K562 (cell line): ENCODE measurements at regions of chr20 and their contacts with region 1.

Region 1: GRCh38 chr20:31587545-31588389 is 17.3 kb upstream of the ID1 start:
- DNase-seq: peak in 3 of 4 experiments; percentile 39 to 69 (median 64)
- ATAC-seq: peak; percentile 67
- H3K4me3 ChIP-seq: peak overlapping the region; percentile 27; the same call in 1 of the 2 replicates
- H3K27ac ChIP-seq: no peak overlapping the region
- H3K4me1 ChIP-seq: peaks cover 10 to 27% of the 10 kb centered on the region in 2 experiments
- H3K27me3 ChIP-seq: no peaks in the 10 kb centered on the region
- CTCF ChIP-seq: no peak
- EP300 ChIP-seq: no peak
- POLR2A ChIP-seq: no peak
- RAD21 ChIP-seq: no peak

Region 2: GRCh38 chr20:31572701-31573554 is 14.8 kb before region 1 on chr20:
- CTCF ChIA-PET with region 1: no interaction called
- POLR2A ChIA-PET with region 1: interaction called, 28 read pairs
- in situ Hi-C with region 1: no loop called
- intact Hi-C with region 1: loop called (anchors 2 kb)
- DNase-seq: peak; percentile 93 to 99 (median 95)
- ATAC-seq: peak; percentile 87
- H3K4me3 ChIP-seq: peak overlapping the region; percentile 84
- H3K27ac ChIP-seq: peak overlapping the region; percentile 96
- H3K4me1 ChIP-seq: peaks cover 10 to 48% of the 10 kb centered on the region in 2 experiments; a peak in 4 of 5 replicates
- H3K27me3 ChIP-seq: no peaks in the 10 kb centered on the region
- CTCF ChIP-seq: peak in 2 of 3 experiments; percentile 0 to 9; a peak in 1 of 6 replicates
- EP300 ChIP-seq: peak; percentile 20
- POLR2A ChIP-seq: peak; percentile 83
- RAD21 ChIP-seq: peak; percentile 1 to 37; a peak in 1 of 4 replicates

Region 3: DNA sequence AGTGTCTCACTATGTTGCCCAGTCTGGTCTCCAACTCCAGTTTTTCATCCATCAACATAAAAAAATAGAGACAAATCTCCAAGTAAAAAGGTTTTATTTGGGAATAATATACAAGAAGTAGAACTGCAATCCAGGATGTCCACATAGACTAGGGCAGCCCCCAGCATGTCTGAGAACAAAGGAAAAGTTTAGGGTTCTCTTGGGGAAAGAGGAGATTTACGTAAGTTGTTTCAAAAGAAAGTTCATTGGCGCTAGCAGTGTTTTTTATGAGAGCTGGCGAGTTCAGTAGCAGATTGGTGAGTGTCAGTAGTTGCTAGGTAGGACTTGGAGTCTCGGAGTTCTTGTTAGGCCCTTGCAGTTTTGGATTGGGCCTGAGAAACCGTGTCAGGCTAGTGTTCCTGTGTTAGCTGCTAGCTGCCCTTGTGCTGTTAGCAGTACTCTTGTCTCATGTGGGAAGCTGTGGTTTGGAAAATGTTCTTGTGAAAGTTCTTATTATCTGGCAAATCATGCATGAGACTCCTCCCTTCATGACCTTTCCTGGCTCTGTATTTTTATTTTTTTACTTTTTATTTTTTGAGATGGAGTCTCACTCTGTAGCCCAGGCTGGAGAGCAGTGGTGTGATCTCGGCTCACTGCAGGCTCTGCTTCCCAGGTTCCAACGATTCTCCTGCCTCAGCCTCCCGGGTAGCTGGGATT is 307.4 kb after region 1 on chr20:
- CTCF ChIA-PET with region 1: no interaction called
- POLR2A ChIA-PET with region 1: no interaction called
- in situ Hi-C with region 1: no loop called
- intact Hi-C with region 1: no loop called
- DNase-seq: peak in 1 of 4 experiments; percentile 29
- ATAC-seq: peak; percentile 91
- H3K4me3 ChIP-seq: no peak overlapping the region
- H3K27ac ChIP-seq: no peak overlapping the region
- H3K4me1 ChIP-seq: no peaks in the 10 kb centered on the region
- H3K27me3 ChIP-seq: peaks cover 11 to 18% of the 10 kb centered on the region in 2 experiments
- CTCF ChIP-seq: no peak
- EP300 ChIP-seq: no peak
- POLR2A ChIP-seq: no peak
- RAD21 ChIP-seq: no peak